ENCODE measurements at regions of chr12 and their contacts with region 1.

Region 1: GRCh38 chr12:47079468-47079980 is at the starts of genes AMIGO2 and PCED1B:
- DNase-seq: peak; percentile 46 to 58
- H3K4me3 ChIP-seq: peak within 1 kb of the TSS; percentile 96
- H3K27ac ChIP-seq: peak within 1 kb of the TSS; percentile 98
- H3K4me1 ChIP-seq: peaks cover 50% of the 10 kb centered on the region
- H3K27me3 ChIP-seq: no peaks in the 10 kb centered on the region
- CTCF ChIP-seq: peak; percentile 26; the same call in 1 of the 2 replicates
- total RNA-seq, gene AMIGO2: 41.9 and 46.3 TPM in 2 replicates
- total RNA-seq, gene PCED1B: 10.9 and 11.2 TPM in 2 replicates

Region 2: DNA sequence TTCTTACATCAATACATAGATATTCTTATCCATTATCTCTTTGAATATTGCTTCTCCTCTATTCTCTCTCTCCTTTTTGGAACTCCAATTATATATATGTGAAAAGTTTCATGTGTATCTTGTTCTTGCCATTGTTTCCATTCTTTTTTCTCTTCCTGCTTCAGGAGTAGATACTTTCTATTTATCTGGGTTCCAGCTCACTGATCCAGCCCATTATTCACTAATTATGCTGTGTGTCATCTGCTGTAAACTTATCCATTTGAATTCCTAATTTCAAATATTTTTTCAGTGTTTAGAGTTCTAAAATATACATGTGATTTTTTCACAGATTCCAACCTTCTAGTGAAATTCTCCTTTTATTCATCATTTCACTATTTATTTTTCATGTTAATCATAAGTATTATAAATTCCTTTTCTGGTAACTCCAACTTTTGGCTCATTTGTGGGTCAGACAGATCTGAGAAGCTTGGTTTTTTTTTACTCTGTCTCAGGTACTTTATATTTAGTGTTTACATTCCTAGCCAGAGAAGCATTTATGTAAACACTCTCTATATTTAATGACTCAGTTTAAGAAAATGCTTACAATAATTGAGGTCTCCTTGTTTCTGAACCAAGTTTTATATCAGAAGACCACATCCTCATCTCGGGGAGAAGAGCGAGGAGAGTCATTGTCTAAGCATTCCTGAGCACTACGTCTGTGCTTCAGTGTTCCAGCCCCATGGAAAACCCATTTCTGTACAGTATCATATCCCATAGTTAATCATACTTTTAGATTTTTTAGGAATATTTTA is 16.1 kb after region 1 on chr12:
- CTCF ChIA-PET with region 1: interaction called, 13 read pairs
- POLR2A ChIA-PET with region 1: interaction called, 33 read pairs
- intact Hi-C with region 1: loop called (anchors 1 kb)
- DNase-seq: peak; percentile 34 to 84
- H3K4me3 ChIP-seq: no peak overlapping the region; the same call in 1 of the 2 replicates
- H3K27ac ChIP-seq: peak overlapping the region; percentile 71
- H3K4me1 ChIP-seq: peaks cover 49% of the 10 kb centered on the region
- H3K27me3 ChIP-seq: no peaks in the 10 kb centered on the region
- CTCF ChIP-seq: no peak

Region 3: DNA sequence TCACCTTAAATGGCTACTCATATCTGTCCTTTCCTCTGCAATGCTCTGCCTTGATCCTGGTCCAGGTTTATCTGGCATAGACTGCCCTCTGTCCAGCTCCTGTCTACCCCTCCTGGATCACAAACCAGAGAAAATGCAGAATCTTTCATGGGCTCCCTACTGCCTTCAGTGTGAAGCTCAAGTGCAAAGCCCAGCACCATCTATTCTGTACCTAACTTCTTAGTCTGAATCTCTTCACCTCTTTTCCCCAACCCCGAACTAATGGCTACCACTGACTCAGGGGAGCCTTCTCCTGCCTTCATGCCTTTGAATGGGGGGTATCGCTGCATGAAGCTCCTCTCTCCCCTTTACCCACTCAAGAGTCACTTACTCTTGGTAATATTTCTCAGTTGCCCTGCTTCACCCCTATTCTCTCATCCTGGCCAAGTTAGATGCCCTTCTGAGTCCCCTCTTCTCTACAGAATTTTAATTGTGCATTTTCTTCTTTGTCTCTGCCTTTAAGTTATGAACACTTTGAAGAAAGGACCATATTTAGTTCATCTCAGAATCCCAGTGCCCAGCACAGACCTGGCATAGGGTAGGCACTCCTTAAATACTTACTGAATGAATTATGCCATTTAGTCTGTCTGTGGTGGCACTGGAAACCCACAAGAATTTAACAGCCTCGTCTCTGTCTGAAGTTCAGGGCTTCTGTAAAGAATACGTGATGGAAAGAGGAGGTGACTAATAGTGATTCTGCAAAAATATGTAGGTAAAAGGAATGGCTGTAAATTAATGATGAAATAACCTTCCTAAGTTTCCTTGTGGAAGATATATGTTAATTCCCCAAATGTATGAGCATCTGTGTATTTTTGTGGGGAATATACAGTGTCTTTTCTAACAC is 191.5 kb after region 1 on chr12:
- CTCF ChIA-PET with region 1: interaction called, 3 read pairs
- POLR2A ChIA-PET with region 1: interaction called, 3 read pairs
- intact Hi-C with region 1: loop called (anchors 1 kb)
- DNase-seq: peak; percentile 70 to 99
- H3K4me3 ChIP-seq: peak overlapping the region; percentile 41; the same call in 1 of the 2 replicates
- H3K27ac ChIP-seq: peak overlapping the region; percentile 100
- H3K4me1 ChIP-seq: peaks cover 76% of the 10 kb centered on the region
- H3K27me3 ChIP-seq: no peaks in the 10 kb centered on the region
- CTCF ChIP-seq: no peak

Region 4: GRCh38 chr12:47276621-47277309 is 197.2 kb after region 1 on chr12:
- CTCF ChIA-PET with region 1: interaction called, 5 read pairs
- POLR2A ChIA-PET with region 1: interaction called, 10 read pairs
- intact Hi-C with region 1: loop called (anchors 1 kb)
- DNase-seq: peak; percentile 64 to 80
- H3K4me3 ChIP-seq: peak overlapping the region; percentile 1; the same call in 1 of the 2 replicates
- H3K27ac ChIP-seq: peak overlapping the region; percentile 93
- H3K4me1 ChIP-seq: peaks cover 76% of the 10 kb centered on the region
- H3K27me3 ChIP-seq: no peaks in the 10 kb centered on the region
- CTCF ChIP-seq: no peak

Region 5: DNA sequence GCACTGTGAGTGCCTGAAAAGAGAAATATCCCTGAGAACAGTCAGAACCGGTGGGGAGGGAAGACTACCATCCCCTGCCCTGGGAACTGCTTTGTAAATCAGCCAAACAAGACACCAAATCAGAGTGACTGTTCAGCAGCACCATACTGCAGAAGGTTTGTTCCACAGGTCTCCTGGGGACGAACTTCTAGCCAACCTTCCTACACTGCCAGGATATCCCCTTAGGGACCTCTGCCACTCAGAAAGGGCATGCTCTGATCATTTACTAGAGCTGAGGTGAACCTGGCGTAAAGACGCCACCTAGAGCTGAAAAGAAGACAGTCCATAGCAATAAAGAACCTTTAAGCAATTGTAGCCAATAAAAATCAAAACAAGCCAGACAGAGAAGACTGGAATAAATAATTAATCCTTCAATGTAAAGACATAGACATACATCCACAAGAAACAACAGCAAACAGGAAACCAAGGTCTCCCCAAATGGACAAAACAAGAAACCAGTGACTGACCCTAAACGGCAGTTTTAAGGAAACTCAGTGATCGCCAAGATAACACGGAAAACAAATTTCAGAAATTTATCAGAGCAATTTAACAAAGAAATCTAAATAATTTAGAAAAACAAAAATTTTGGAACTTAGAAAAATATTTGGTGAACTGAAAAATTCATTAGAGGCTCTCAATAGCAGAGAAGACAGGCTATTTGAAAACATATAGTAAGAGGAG is 228.3 kb after region 1 on chr12:
- CTCF ChIA-PET with region 1: interaction called, 3 read pairs
- POLR2A ChIA-PET with region 1: no interaction called
- intact Hi-C with region 1: loop called (anchors 1 kb)
- DNase-seq: peak; percentile 55 to 56
- H3K4me3 ChIP-seq: no peak overlapping the region
- H3K27ac ChIP-seq: peak overlapping the region; percentile 24
- H3K4me1 ChIP-seq: peaks cover 5% of the 10 kb centered on the region; the same call in 1 of the 2 replicates
- H3K27me3 ChIP-seq: no peaks in the 10 kb centered on the region
- CTCF ChIP-seq: peak; percentile 74

Region 6: DNA sequence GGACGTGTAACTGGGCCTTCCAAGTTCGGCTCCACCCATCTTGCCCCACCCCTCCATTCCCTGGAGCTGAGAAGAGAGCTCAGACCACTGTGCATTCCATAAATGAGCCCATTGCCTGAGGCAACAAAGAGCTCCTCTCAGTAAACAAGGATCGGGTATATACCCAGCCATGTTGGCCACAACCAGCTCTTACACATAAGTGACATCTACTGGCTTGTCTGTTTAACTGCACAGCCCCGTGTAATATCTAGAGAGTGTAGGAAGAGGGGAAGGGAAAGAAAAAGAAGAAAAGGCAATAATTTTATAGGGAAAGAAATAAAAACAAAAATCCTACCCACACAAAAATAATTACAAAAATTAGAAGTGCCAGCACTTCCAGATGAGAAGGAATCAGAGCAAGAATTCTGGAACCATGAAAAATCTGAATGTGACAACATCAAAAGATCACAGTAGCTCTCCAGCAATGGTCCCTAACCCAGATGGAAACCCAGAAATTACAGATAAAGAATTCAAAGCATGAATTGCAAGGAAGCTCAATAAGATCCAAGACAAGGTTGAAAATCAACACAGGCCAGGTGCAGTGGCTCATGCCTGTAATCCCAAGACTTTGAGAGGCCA is 318.2 kb after region 1 on chr12:
- CTCF ChIA-PET with region 1: interaction called, 6 read pairs
- POLR2A ChIA-PET with region 1: no interaction called
- intact Hi-C with region 1: loop called (anchors 1 kb)
- DNase-seq: peak; percentile 57 to 78
- H3K4me3 ChIP-seq: no peak overlapping the region
- H3K27ac ChIP-seq: peak overlapping the region; percentile 25; the same call in 1 of the 2 replicates
- H3K4me1 ChIP-seq: peaks cover 17% of the 10 kb centered on the region
- H3K27me3 ChIP-seq: no peaks in the 10 kb centered on the region
- CTCF ChIP-seq: peak; percentile 77

Measured in PC-9 (cell line).